ENCODE measurements at regions of chr16 and their contacts with region 1.

Region 1: DNA sequence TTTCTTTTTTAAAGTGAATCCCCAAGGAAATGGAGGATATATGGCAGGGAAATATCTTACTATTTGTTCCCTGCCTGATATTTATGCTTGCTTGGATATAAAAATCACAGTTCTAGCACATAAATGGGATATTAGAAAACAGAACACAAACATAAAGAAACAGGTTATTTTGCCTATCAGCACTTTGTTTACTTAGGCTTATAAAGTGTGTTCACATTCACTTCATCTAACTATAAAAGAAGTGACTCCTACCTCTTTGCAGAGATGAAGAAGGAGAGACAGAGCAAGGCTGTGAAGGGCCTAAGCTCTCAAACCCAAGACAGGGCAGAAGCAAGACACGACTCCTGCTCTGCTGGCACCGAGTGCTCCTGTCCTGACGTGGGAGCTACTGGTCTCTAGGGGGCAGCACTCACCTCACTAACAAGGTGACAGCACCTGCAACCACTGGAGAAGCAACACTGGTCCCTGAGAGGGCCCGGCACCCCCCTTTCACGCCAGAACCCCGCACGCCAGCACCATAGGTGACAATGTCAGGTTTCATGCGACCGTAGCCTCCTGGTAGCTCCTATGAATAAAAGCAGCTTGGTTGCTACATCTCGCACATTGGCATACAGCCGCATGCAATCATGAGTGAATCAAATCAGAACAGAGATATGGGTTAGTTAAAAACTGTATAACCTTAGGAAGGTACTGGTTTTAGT is 32.0 kb downstream of the MBTPS1 start:
- DNase-seq: peak; percentile 84
- ATAC-seq: peak; percentile 84
- H3K4me3 Mint-ChIP-seq: no peak overlapping the region
- H3K27ac Mint-ChIP-seq: no peak overlapping the region
- H3K4me1 Mint-ChIP-seq: peaks cover 46% of the 10 kb centered on the region
- H3K27me3 Mint-ChIP-seq: no peaks in the 10 kb centered on the region

Region 2: GRCh38 chr16:84029297-84030047 is 55.2 kb before region 1 on chr16:
- CTCF ChIA-PET with region 1: no interaction called
- POLR2A ChIA-PET with region 1: no interaction called
- DNase-seq: no peak
- ATAC-seq: no peak
- H3K4me3 Mint-ChIP-seq: no peak overlapping the region
- H3K27ac Mint-ChIP-seq: no peak overlapping the region
- H3K4me1 Mint-ChIP-seq: peaks cover 18% of the 10 kb centered on the region
- H3K27me3 Mint-ChIP-seq: peaks cover 21% of the 10 kb centered on the region

Region 3: GRCh38 chr16:84096115-84097012 is 11.6 kb after region 1 on chr16:
- CTCF ChIA-PET with region 1: interaction called, 13 read pairs
- POLR2A ChIA-PET with region 1: no interaction called
- DNase-seq: no peak
- ATAC-seq: no peak
- H3K4me3 Mint-ChIP-seq: no peak overlapping the region
- H3K27ac Mint-ChIP-seq: no peak overlapping the region
- H3K4me1 Mint-ChIP-seq: peaks cover 14% of the 10 kb centered on the region
- H3K27me3 Mint-ChIP-seq: no peaks in the 10 kb centered on the region

Region 4: GRCh38 chr16:84138824-84139627 is 54.3 kb after region 1 on chr16:
- CTCF ChIA-PET with region 1: interaction called, 23 read pairs
- POLR2A ChIA-PET with region 1: no interaction called
- DNase-seq: peak; percentile 61
- ATAC-seq: peak; percentile 73
- H3K4me3 Mint-ChIP-seq: no peak overlapping the region
- H3K27ac Mint-ChIP-seq: peak overlapping the region; percentile 66
- H3K4me1 Mint-ChIP-seq: peaks cover 35% of the 10 kb centered on the region
- H3K27me3 Mint-ChIP-seq: no peaks in the 10 kb centered on the region

Region 5: GRCh38 chr16:84169765-84170310 is 85.1 kb after region 1 on chr16:
- CTCF ChIA-PET with region 1: interaction called, 95 read pairs
- POLR2A ChIA-PET with region 1: interaction called, 3 read pairs
- DNase-seq: no peak
- ATAC-seq: no peak
- H3K4me3 Mint-ChIP-seq: no peak overlapping the region
- H3K27ac Mint-ChIP-seq: no peak overlapping the region
- H3K4me1 Mint-ChIP-seq: no peaks in the 10 kb centered on the region
- H3K27me3 Mint-ChIP-seq: peaks cover 15% of the 10 kb centered on the region

Region 6: DNA sequence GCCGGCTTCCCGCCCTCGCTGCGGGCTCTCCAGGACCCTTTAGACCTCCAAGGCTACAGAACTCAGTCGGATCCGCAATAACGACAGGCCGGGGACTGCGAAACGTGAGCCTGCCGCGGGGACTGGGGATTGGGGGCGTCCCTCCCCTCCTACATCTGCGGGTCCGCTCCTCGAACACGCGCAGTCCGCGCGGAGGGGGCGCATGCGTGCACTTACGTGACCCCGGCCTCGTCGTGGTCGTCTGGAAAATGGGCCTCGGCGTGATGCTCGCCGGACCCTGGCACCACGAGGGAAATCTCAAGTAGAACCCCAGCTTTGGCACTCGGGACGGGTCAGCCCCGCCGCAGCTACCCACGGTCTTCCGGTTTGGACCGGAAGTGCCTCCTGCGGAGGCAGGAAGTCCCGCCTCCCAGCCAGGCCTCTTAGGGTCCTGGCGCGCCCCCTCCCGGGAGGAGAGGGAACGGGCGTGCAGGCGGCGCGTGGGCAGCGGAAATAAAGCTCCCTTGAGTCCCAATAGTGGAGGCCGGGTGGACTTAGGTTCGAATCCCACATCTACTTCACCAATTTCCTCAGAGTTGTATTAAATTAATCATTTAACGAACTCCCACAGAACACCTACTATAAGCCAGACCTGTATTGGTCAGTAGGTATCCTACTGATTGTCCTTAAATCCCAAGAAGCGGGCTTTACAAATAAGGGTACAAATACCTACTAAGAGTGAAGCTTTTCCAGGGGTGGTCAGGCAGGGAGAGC is 102.1 kb after region 1 on chr16 and contains the start of gene TAF1C:
- CTCF ChIA-PET with region 1: interaction called, 47 read pairs
- POLR2A ChIA-PET with region 1: interaction called, 5 read pairs
- DNase-seq: peak; percentile 93
- ATAC-seq: peak; percentile 89
- H3K4me3 Mint-ChIP-seq: peak within 1 kb of the TSS; percentile 94
- H3K27ac Mint-ChIP-seq: peak within 1 kb of the TSS; percentile 92
- H3K4me1 Mint-ChIP-seq: peaks cover 25% of the 10 kb centered on the region
- H3K27me3 Mint-ChIP-seq: no peaks in the 10 kb centered on the region
- total RNA-seq, gene TAF1C: 53.4 to 62.3 TPM